ENCODE measurements at regions of chr2 and their contacts with region 1.

Region 1: GRCh38 chr2:95115418-95115817 is 6.2 kb downstream of the MRPS5 start:
- DNase-seq: peak; percentile 75
- H3K4me3 ChIP-seq: no peak overlapping the region
- H3K27ac ChIP-seq: no peak overlapping the region
- H3K4me1 ChIP-seq: peaks cover 7% of the 10 kb centered on the region
- H3K27me3 ChIP-seq: no peaks in the 10 kb centered on the region
- CTCF ChIP-seq: peak; percentile 62

Region 2: DNA sequence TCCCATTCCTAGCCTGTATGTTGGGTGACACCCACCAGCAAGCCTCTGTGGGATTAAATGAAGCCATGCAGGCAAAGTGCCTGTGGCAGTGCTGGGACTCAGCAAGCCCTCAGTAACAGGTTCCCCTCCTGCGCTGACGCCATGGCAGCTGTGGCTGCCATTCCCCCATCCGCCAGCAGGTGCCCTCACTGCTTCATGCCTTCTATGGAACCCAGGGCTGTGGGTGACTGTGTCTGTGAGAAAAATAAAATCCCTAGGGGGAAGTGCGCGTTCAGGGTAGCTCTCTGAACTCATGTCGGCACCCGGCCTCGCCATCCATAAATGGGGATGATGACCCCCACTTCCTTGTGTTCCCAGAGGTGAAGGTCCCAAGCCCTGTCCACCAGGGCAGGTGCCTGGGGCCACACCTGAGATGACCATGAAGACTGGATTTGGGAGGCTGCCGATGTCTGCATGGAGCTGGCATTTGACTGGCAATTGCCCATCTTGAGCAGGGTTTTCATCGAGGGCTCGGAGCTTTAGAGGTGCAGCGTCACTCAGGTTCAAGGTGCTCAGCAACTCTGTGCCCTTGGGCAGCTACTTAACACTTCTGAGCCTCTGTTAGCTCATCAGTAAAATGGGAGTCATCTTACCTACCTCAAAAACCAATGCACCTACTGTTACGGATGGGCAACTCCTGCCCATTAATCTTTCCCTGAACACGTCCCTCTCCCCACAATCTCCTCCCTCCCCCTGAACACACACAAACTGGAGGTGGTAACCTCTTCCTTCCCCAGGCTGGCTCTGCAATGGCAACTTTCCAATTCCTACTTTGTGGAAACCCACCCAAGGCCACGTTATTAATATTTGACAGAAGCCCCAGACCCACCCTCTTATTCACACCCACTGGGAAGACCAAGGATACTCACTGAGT is 92.9 kb before region 1 on chr2:
- intact Hi-C with region 1: loop called (anchors 5 kb)
- DNase-seq: peak; percentile 65
- H3K4me3 ChIP-seq: no peak overlapping the region
- H3K27ac ChIP-seq: no peak overlapping the region
- H3K4me1 ChIP-seq: no peaks in the 10 kb centered on the region
- H3K27me3 ChIP-seq: peaks cover 27% of the 10 kb centered on the region
- CTCF ChIP-seq: peak; percentile 89

Region 3: DNA sequence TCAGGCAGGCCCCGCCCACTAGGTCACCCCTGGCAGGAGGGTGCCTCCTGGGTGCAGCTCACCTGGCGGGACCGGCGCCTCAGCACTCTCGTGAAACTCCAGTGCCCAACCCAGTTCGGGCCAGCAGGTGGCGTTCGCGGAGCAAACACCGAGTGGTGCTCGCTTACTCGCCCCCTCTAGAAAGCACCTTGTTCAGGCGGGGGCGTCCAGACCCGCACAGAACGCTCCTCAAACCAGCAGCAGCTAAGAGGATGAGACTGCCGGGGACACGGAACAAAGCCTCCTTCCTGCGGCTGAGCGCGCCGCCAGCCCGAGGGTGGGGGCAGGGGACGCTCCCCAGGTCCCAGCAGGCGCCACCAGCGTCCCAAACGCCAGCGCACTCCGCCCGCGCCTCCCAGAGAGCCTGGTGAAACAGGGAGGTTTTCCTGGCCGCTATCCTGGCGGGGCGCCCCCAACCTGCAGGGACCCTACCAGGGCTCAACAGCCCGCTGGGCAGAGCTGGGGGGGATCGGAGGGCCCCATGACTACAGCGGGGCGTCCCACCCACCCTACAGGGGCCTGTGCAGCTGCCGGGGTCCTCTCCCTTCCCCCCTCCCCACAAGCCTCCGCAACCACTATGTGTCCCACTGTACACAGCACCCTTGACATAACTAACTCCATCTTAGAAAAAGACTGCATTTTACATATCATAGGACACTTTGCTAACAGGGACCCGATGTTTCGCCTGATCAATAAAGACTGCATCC is 38.5 kb before region 1 on chr2:
- intact Hi-C with region 1: loop called (anchors 2 kb)
- DNase-seq: peak; percentile 92
- H3K4me3 ChIP-seq: peak overlapping the region; percentile 50
- H3K27ac ChIP-seq: no peak overlapping the region
- H3K4me1 ChIP-seq: peaks cover 8% of the 10 kb centered on the region
- H3K27me3 ChIP-seq: no peaks in the 10 kb centered on the region
- CTCF ChIP-seq: peak; percentile 84

Region 4: GRCh38 chr2:95179451-95179850 is 64.0 kb after region 1 on chr2:
- intact Hi-C with region 1: no loop called
- DNase-seq: peak; percentile 25
- H3K4me3 ChIP-seq: no peak overlapping the region
- H3K27ac ChIP-seq: no peak overlapping the region
- H3K4me1 ChIP-seq: no peaks in the 10 kb centered on the region
- H3K27me3 ChIP-seq: no peaks in the 10 kb centered on the region
- CTCF ChIP-seq: no peak